ENCODE measurements at regions of chr6 and their contacts with region 1.

Region 1: DNA sequence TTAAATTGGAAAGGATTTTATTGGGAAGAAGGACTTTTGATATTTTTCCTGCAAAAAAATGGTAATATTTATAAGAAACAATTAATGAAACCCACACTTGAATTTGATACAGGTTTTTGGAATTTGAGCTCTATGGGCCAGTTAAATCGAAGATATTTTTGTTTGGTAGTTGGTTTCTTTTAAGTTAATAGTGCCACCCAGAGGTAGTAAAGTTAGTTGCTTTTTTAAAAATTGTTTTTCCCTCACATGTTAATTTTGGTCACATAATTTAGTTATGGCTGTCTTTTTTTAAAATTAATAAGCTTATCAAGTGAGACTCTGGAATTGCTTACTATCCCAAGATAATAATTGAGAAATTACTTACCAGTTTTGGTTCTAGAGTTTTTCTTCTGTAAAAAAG is 7.1 kb downstream of the PRIM2 start:
- DNase-seq: no peak
- ATAC-seq: peak; percentile 63
- H3K4me3 ChIP-seq: no peak overlapping the region
- H3K27ac ChIP-seq: no peak overlapping the region
- H3K4me1 ChIP-seq: no peaks in the 10 kb centered on the region
- H3K27me3 ChIP-seq: no peaks in the 10 kb centered on the region
- CTCF ChIP-seq: peak; percentile 7 to 39 (median 32); a peak in 4 of 6 replicates
- EP300 ChIP-seq: no peak
- POLR2A ChIP-seq: no peak
- RAD21 ChIP-seq: peak; percentile 37

Region 2: DNA sequence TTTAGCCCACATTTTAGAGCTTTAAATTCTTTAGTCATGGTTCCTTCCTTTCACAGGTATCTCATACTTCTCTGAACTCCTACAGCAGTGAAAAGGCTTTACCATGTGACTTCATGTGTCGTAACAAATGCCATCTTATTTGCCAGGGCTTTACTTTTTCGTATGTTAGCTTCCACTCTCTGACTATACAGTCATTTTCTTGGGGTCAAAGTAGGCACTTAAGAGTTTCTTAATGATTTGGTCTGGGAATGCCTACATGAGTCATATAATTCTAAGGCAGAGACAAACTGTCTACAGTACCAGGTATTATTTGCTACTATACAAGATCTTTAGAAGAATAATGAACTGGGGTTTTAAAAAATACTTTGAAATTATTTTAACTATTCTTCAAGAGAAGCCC is 117.4 kb before region 1 on chr6:
- CTCF ChIA-PET with region 1: no interaction called
- POLR2A ChIA-PET with region 1: no interaction called
- RAD21 ChIA-PET with region 1: no interaction called
- SMC1A ChIA-PET with region 1: no interaction called
- in situ Hi-C with region 1: no loop called
- intact Hi-C with region 1: no loop called
- DNase-seq: no peak
- ATAC-seq: peak; percentile 46
- H3K4me3 ChIP-seq: no peak overlapping the region
- H3K27ac ChIP-seq: no peak overlapping the region
- H3K4me1 ChIP-seq: no peaks in the 10 kb centered on the region
- H3K27me3 ChIP-seq: no peaks in the 10 kb centered on the region
- CTCF ChIP-seq: no peak
- EP300 ChIP-seq: no peak
- POLR2A ChIP-seq: no peak
- RAD21 ChIP-seq: no peak

Region 3: GRCh38 chr6:57267586-57268293 is 56.8 kb before region 1 on chr6:
- CTCF ChIA-PET with region 1: interaction called, 14 read pairs
- POLR2A ChIA-PET with region 1: no interaction called
- RAD21 ChIA-PET with region 1: no interaction called
- SMC1A ChIA-PET with region 1: interaction called, 3 read pairs
- in situ Hi-C with region 1: no loop called
- intact Hi-C with region 1: no loop called
- DNase-seq: peak; percentile 8
- ATAC-seq: peak; percentile 58; the same call in 2 of the 3 replicates
- H3K4me3 ChIP-seq: no peak overlapping the region
- H3K27ac ChIP-seq: no peak overlapping the region
- H3K4me1 ChIP-seq: no peaks in the 10 kb centered on the region
- H3K27me3 ChIP-seq: no peaks in the 10 kb centered on the region
- CTCF ChIP-seq: peak; percentile 36 to 49 (median 45); a peak in 5 of 6 replicates
- EP300 ChIP-seq: no peak
- POLR2A ChIP-seq: no peak
- RAD21 ChIP-seq: peak; percentile 58

Measured in GM12878 (cell line).